ENCODE measurements at regions of chr4 and their contacts with region 1.

Region 1: DNA sequence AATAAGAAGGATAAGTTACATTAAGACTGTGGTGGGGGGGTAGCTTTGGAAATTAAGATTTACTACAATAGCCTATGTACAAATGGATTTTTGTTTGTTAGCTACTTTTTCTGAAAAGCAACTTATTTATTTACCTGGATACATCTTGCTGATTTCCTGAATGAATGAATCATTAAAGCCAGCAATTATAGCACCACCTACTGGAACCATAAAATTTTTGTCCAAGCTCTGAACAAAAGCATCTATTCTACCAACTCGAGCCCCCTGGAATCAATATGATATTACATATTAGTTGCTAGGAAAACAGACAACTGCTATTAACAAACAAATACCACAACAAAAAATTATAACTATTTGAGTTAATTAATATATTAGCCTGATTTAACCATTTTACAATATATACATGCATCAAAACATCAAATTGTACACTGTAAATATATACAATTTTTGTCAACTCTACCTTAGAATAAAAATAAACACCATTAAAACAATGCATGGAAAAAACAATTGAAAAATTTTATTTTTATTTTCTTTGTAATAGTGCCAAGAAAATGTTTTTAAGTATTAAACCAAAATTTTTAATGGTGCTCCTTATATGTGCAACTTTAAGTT is 15.3 kb downstream of the SEPSECS start:
- DNase-seq: no peak
- ATAC-seq: no peak
- H3K4me3 Mint-ChIP-seq: no peak overlapping the region
- H3K27ac Mint-ChIP-seq: no peak overlapping the region
- H3K4me1 Mint-ChIP-seq: no peaks in the 10 kb centered on the region
- H3K27me3 Mint-ChIP-seq: no peaks in the 10 kb centered on the region
- CTCF ChIP-seq: no peak

Region 2: DNA sequence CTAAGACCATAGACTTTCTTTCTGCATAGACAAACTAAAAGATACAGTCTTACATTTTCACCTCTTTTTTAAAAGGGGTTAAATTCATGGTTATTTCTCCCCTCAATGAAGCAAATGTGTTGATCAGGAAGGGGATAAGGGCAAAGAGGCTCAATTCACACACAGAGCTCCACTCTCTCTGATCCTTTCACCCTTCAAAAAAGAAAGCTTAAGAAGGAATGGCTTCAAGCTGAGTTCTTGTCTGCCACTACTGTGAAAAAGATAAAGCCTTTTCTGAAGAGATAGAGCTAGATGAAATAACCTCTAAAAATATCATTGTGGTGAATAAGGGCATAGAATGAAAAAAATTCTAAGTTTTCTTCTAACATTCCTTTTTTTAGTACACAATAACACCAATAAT is 13.1 kb before region 1 on chr4:
- CTCF ChIA-PET with region 1: interaction called, 18 read pairs
- POLR2A ChIA-PET with region 1: no interaction called
- DNase-seq: no peak
- ATAC-seq: peak; percentile 94
- H3K4me3 Mint-ChIP-seq: no peak overlapping the region; the same call in 1 of the 2 replicates
- H3K27ac Mint-ChIP-seq: 0 out of 2 replicates have a peak overlapping the region, but pooled peaks have one; percentile 61
- H3K4me1 Mint-ChIP-seq: peaks cover 54% of the 10 kb centered on the region
- H3K27me3 Mint-ChIP-seq: no peaks in the 10 kb centered on the region; the same call in 1 of the 2 replicates
- CTCF ChIP-seq: no peak

Region 3: GRCh38 chr4:25159884-25160713 is 15.1 kb after region 1 on chr4 and contains the start of gene SEPSECS:
- CTCF ChIA-PET with region 1: interaction called, 10 read pairs
- POLR2A ChIA-PET with region 1: interaction called, 3 read pairs
- DNase-seq: peak; percentile 87
- ATAC-seq: peak; percentile 81
- H3K4me3 Mint-ChIP-seq: peak within 1 kb of the TSS; percentile 88
- H3K27ac Mint-ChIP-seq: peak within 1 kb of the TSS; percentile 87
- H3K4me1 Mint-ChIP-seq: peaks cover 25% of the 10 kb centered on the region
- H3K27me3 Mint-ChIP-seq: no peaks in the 10 kb centered on the region
- CTCF ChIP-seq: no peak
- total RNA-seq, gene SEPSECS: 4.6 to 7.0 TPM (median 6.2 TPM) in 3 replicates